CD4-positive, alpha-beta T cell (primary cell): ENCODE measurements at regions of chr19 and their contacts with region 1.

Region 1: GRCh38 chr19:10251792-10252694 is at the start of gene MRPL4:
- DNase-seq: peak; percentile 87 to 99 (median 94)
- ATAC-seq: peak; percentile 97
- H3K4me3 ChIP-seq: peak within 1 kb of the TSS; percentile 86
- H3K4me3 Mint-ChIP-seq: peak within 1 kb of the TSS; percentile 100
- H3K27ac ChIP-seq: peak within 1 kb of the TSS; percentile 52 to 73
- H3K27ac Mint-ChIP-seq: peak within 1 kb of the TSS; percentile 98
- H3K4me1 ChIP-seq: peaks cover 27% of the 10 kb centered on the region
- H3K4me1 Mint-ChIP-seq: peaks cover 21% of the 10 kb centered on the region
- H3K27me3 ChIP-seq: no peaks in the 10 kb centered on the region
- H3K27me3 Mint-ChIP-seq: no peaks in the 10 kb centered on the region
- CTCF ChIP-seq: no peak
- total RNA-seq, gene MRPL4: 44.6 to 47.3 TPM

Region 2: GRCh38 chr19:9608912-9609311 is 643.1 kb before region 1 on chr19:
- CTCF ChIA-PET with region 1: no interaction called
- POLR2A ChIA-PET with region 1: no interaction called
- intact Hi-C with region 1: no loop called
- DNase-seq: no peak
- ATAC-seq: no peak
- H3K4me3 ChIP-seq: no peak overlapping the region
- H3K4me3 Mint-ChIP-seq: no peak overlapping the region
- H3K27ac ChIP-seq: no peak overlapping the region
- H3K27ac Mint-ChIP-seq: no peak overlapping the region
- H3K4me1 ChIP-seq: no peaks in the 10 kb centered on the region
- H3K4me1 Mint-ChIP-seq: no peaks in the 10 kb centered on the region
- H3K27me3 ChIP-seq: no peaks in the 10 kb centered on the region
- H3K27me3 Mint-ChIP-seq: no peaks in the 10 kb centered on the region
- CTCF ChIP-seq: no peak

Region 3: DNA sequence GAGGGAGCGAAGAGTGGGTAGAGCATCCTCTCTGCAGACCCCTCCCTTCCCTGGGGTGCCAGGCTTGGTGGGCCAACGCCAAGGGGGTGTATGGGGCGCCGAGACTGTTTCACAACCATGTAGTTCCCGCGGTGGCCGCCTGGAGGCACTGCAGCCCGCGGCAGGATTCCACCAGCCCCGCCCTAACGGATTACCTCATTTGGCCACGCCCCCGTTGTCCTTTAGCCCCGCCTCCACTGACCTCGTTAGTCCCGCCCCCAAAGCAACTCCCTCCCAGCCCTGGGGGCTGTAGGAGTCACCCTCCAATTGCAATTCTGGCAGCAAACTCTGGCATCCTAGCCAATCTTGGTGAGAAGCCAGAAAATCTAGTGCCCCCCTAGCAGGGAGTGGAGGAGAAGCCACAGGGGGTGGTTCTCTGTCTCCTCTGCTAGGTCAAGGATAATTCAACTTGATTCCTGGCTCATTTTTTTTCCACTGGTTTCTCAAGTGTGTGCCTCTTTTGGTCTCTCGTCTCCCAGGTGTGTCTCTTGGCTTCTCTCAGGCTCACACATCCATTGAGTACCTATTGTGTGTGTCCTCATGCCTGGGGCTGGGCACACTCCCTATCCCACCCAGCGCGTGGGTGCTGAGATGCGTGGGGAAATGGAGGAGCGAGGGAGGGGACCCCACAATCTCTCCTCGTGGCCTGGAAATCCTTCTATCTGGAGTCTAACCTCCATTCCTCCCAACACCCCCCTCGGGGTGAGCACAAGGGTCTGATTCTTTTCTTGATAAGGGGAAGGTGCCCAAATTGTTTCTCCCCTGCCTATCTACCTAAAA is 317.7 kb before region 1 on chr19:
- CTCF ChIA-PET with region 1: no interaction called
- POLR2A ChIA-PET with region 1: no interaction called
- intact Hi-C with region 1: loop called (anchors 1 to 2 kb)
- DNase-seq: peak; percentile 63 to 90 (median 76)
- ATAC-seq: peak; percentile 77
- H3K4me3 ChIP-seq: no peak overlapping the region
- H3K4me3 Mint-ChIP-seq: no peak overlapping the region
- H3K27ac ChIP-seq: no peak overlapping the region
- H3K27ac Mint-ChIP-seq: no peak overlapping the region
- H3K4me1 ChIP-seq: peaks cover 32% of the 10 kb centered on the region
- H3K4me1 Mint-ChIP-seq: peaks cover 33% of the 10 kb centered on the region
- H3K27me3 ChIP-seq: peaks cover 39 to 52% of the 10 kb centered on the region in 2 experiments
- H3K27me3 Mint-ChIP-seq: peaks cover 69% of the 10 kb centered on the region
- CTCF ChIP-seq: peak; percentile 80

Region 4: DNA sequence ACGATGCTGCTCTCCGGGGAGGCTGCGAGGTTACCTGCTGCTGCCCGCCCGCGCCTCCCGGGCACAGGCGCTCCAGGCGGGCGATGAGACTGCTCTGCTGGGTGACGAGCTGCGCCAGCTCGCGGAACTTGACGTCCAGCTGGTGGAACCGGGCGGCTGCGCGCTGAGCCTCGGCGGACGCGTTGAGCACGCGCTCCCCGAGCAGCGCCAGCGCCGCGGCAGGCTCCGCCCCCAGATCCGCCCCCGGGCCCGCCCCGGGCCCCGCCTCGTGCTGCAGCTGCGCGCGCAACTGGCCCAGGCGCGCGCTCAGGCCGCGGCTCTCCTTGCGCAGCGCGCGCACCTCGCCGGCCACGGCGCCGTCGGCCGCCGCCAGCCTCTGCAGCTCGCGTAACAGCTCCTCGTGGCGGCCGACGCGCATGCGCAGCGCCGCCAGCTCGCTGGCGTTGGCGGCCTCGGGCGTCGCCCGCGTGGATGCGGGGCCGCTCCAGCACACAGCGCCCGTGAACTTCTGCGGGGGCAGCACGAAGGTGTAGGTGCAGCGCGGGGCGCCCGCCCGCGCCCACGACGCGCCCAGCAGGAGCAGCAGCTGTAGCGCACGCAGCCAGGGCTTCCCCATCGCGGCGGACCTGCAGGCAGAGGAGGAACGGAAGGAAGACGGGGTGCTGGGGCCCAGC is 156.0 kb before region 1 on chr19:
- CTCF ChIA-PET with region 1: no interaction called
- POLR2A ChIA-PET with region 1: interaction called, 6 read pairs
- intact Hi-C with region 1: loop called in 1 of 2 experiments (anchors 1 kb)
- DNase-seq: peak; percentile 78 to 98 (median 88)
- ATAC-seq: peak; percentile 88
- H3K4me3 ChIP-seq: peak overlapping the region; percentile 53
- H3K4me3 Mint-ChIP-seq: peak overlapping the region; percentile 65
- H3K27ac ChIP-seq: peak overlapping the region; percentile 48 to 56
- H3K27ac Mint-ChIP-seq: peak overlapping the region; percentile 83
- H3K4me1 ChIP-seq: peaks cover 50% of the 10 kb centered on the region
- H3K4me1 Mint-ChIP-seq: peaks cover 22% of the 10 kb centered on the region
- H3K27me3 ChIP-seq: no peaks in the 10 kb centered on the region
- H3K27me3 Mint-ChIP-seq: no peaks in the 10 kb centered on the region
- CTCF ChIP-seq: no peak

Region 5: GRCh38 chr19:10120538-10121189 is 131.4 kb before region 1 on chr19:
- CTCF ChIA-PET with region 1: no interaction called
- POLR2A ChIA-PET with region 1: no interaction called
- intact Hi-C with region 1: loop called in 1 of 2 experiments (anchors 2 kb)
- DNase-seq: no peak
- ATAC-seq: no peak
- H3K4me3 ChIP-seq: no peak overlapping the region
- H3K4me3 Mint-ChIP-seq: no peak overlapping the region
- H3K27ac ChIP-seq: no peak overlapping the region
- H3K27ac Mint-ChIP-seq: no peak overlapping the region
- H3K4me1 ChIP-seq: peaks cover 42% of the 10 kb centered on the region
- H3K4me1 Mint-ChIP-seq: peaks cover 11% of the 10 kb centered on the region
- H3K27me3 ChIP-seq: no peaks in the 10 kb centered on the region
- H3K27me3 Mint-ChIP-seq: no peaks in the 10 kb centered on the region
- CTCF ChIP-seq: no peak

Region 6: GRCh38 chr19:10219678-10220077 is 32.4 kb before region 1 on chr19:
- CTCF ChIA-PET with region 1: interaction called, 7 read pairs
- POLR2A ChIA-PET with region 1: no interaction called
- intact Hi-C with region 1: loop called in 1 of 2 experiments (anchors 5 kb)
- DNase-seq: peak in 10 of 14 experiments; percentile 7 to 86 (median 28)
- ATAC-seq: peak; percentile 88
- H3K4me3 ChIP-seq: no peak overlapping the region
- H3K4me3 Mint-ChIP-seq: no peak overlapping the region
- H3K27ac ChIP-seq: no peak overlapping the region
- H3K27ac Mint-ChIP-seq: no peak overlapping the region
- H3K4me1 ChIP-seq: peaks cover 18% of the 10 kb centered on the region
- H3K4me1 Mint-ChIP-seq: peaks cover 4% of the 10 kb centered on the region
- H3K27me3 ChIP-seq: no peaks in the 10 kb centered on the region
- H3K27me3 Mint-ChIP-seq: no peaks in the 10 kb centered on the region
- CTCF ChIP-seq: peak; percentile 33

Region 7: DNA sequence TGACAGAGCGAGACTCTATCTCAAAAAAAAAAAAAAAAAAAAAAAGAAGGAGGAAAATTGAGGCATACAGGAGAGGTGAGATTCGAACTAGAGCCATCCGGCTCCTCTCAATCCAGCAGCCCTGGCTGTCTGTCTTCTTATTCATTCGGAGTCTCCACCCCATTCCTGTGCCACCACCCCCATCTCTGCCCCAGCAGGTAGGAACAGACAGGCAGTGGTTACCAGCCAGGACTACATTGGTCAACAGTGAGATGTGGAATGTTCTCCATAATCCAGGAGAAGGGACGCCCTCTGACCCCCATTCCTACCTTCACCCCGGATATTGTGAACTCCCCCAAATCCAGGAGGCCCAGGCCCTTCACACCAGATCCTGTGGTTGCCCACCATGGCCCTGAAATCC is 14.3 kb before region 1 on chr19:
- CTCF ChIA-PET with region 1: interaction called, 26 read pairs
- POLR2A ChIA-PET with region 1: interaction called, 8 read pairs
- intact Hi-C with region 1: no loop called
- DNase-seq: no peak
- ATAC-seq: no peak
- H3K4me3 ChIP-seq: no peak overlapping the region
- H3K4me3 Mint-ChIP-seq: no peak overlapping the region
- H3K27ac ChIP-seq: no peak overlapping the region
- H3K27ac Mint-ChIP-seq: peak overlapping the region; percentile 56
- H3K4me1 ChIP-seq: peaks cover 29% of the 10 kb centered on the region
- H3K4me1 Mint-ChIP-seq: peaks cover 18% of the 10 kb centered on the region
- H3K27me3 ChIP-seq: no peaks in the 10 kb centered on the region
- H3K27me3 Mint-ChIP-seq: no peaks in the 10 kb centered on the region
- CTCF ChIP-seq: no peak

Region 8: DNA sequence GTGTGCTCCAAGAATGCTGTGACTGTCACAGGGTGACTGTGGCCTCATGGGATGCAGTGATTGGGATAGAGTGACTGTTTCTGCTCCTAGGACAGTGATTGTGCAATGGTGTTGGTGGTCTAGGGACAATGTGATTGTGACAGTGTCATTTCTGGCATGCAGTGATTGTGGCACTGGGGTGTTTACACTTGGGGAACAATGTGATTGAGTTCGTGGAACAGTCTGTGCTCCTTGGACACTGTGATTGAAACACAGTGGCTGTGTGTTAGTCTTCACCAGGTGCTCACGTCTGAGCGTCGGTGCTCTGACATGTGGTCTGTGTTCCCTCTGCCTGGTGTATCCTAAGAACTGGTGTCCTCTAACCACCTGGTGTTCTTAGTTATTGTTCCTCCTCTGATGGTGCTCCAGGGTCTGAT is 170.0 kb after region 1 on chr19:
- CTCF ChIA-PET with region 1: no interaction called
- POLR2A ChIA-PET with region 1: no interaction called
- intact Hi-C with region 1: no loop called
- DNase-seq: no peak
- ATAC-seq: no peak
- H3K4me3 ChIP-seq: no peak overlapping the region
- H3K4me3 Mint-ChIP-seq: peak overlapping the region; percentile 50
- H3K27ac ChIP-seq: no peak overlapping the region
- H3K27ac Mint-ChIP-seq: peak overlapping the region; percentile 53
- H3K4me1 ChIP-seq: peaks cover 81% of the 10 kb centered on the region
- H3K4me1 Mint-ChIP-seq: peaks cover 46% of the 10 kb centered on the region
- H3K27me3 ChIP-seq: peaks cover 71 to 81% of the 10 kb centered on the region in 2 experiments
- H3K27me3 Mint-ChIP-seq: peaks cover 75% of the 10 kb centered on the region
- CTCF ChIP-seq: no peak